Activated T-helper 1 cell treated with anti-CD3 and anti-CD28 coated beads, Interleukin-12 subunit alpha, Interleukin-12 subunit beta, Interleukin-2, Interleukin-4 antibody, amounts not matched to agents 30 ng/mL and 10 ng/mL and 1 ng/mL, durations not matched to agents 14 hours and 24 hours and 36 hours (primary cell): ENCODE measurements at regions of chr6 and their contacts with region 1.

Region 1: GRCh38 chr6:42453031-42453653 is 1.4 kb upstream of the TRERF1 start:
- DNase-seq: peak; percentile 76
- H3K4me3 Mint-ChIP-seq: peak overlapping the region; percentile 100
- H3K27ac Mint-ChIP-seq: peak overlapping the region; percentile 68
- H3K4me1 Mint-ChIP-seq: peaks cover 39% of the 10 kb centered on the region
- H3K27me3 Mint-ChIP-seq: no peaks in the 10 kb centered on the region

Region 2: GRCh38 chr6:42043787-42044475 is 409.2 kb before region 1 on chr6:
- intact Hi-C with region 1: loop called (anchors 5 kb)
- DNase-seq: peak; percentile 87
- H3K4me3 Mint-ChIP-seq: peak overlapping the region; percentile 70
- H3K27ac Mint-ChIP-seq: peak overlapping the region; percentile 83
- H3K4me1 Mint-ChIP-seq: peaks cover 82% of the 10 kb centered on the region
- H3K27me3 Mint-ChIP-seq: no peaks in the 10 kb centered on the region

Region 3: GRCh38 chr6:42315991-42316378 is 137.2 kb before region 1 on chr6:
- intact Hi-C with region 1: loop called (anchors 5 kb)
- DNase-seq: no peak
- H3K4me3 Mint-ChIP-seq: no peak overlapping the region
- H3K27ac Mint-ChIP-seq: peak overlapping the region; percentile 80
- H3K4me1 Mint-ChIP-seq: peaks cover 72% of the 10 kb centered on the region
- H3K27me3 Mint-ChIP-seq: no peaks in the 10 kb centered on the region

Region 4: DNA sequence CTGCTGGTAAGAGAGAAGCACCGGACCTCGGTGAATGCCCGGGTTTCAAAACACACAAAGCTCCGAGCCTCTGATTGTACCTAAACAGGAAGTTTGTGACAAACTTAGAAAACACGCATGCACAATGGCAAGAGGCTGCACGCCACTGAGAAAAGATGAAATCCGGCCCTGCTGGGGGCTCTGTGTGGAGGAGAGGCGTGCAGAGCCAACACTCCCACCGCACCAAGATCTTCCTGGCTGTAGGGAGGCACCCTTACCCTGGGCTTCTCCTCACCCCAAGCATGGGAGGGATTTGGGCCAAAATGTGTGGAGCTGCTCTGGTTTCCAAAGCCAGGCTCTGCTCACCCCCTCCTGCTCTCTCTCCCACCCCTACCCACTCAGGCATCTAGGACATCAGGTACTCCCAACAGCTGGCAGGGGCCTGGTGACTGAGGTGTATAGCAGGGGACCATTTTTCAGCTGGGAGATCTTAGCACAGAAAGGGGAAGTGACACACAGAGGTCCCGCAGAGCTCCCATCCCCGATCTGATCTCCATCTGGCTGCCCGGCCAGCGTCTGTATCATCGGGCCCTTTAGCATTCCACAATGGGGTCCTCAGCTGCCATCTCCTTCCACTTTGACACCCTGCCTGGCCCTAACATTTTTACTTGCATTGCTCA is 85.7 kb before region 1 on chr6:
- intact Hi-C with region 1: loop called (anchors 1 kb)
- DNase-seq: peak; percentile 42
- H3K4me3 Mint-ChIP-seq: peak overlapping the region; percentile 70
- H3K27ac Mint-ChIP-seq: peak overlapping the region; percentile 85
- H3K4me1 Mint-ChIP-seq: peaks cover 81% of the 10 kb centered on the region
- H3K27me3 Mint-ChIP-seq: no peaks in the 10 kb centered on the region

Region 5: DNA sequence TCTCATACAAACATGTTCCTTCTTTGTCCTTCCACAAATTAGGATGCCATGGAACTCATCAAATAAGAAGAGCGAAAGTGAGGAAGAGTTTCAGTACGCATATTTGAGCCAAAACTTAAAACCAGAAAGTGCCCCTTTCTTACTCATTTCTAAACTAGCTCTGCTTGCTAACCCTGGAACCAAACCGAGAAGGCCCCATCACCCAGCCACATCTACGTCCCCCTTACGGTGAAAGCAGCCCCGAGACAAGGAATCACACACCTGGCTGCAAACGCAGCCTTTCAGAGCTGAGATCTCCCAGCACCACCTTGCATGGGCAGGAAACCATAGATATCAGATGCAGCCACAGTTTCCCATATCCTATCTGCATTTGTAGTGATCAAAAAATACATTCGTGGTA is 29.9 kb before region 1 on chr6:
- intact Hi-C with region 1: loop called (anchors 1 kb)
- DNase-seq: peak; percentile 21
- H3K4me3 Mint-ChIP-seq: peak overlapping the region; percentile 27
- H3K27ac Mint-ChIP-seq: peak overlapping the region; percentile 6
- H3K4me1 Mint-ChIP-seq: peaks cover 79% of the 10 kb centered on the region
- H3K27me3 Mint-ChIP-seq: no peaks in the 10 kb centered on the region

Region 6: GRCh38 chr6:42532038-42532669 is 79.0 kb after region 1 on chr6:
- intact Hi-C with region 1: loop called (anchors 1 kb)
- DNase-seq: no peak
- H3K4me3 Mint-ChIP-seq: no peak overlapping the region
- H3K27ac Mint-ChIP-seq: no peak overlapping the region
- H3K4me1 Mint-ChIP-seq: no peaks in the 10 kb centered on the region
- H3K27me3 Mint-ChIP-seq: peaks cover 8% of the 10 kb centered on the region

Region 7: DNA sequence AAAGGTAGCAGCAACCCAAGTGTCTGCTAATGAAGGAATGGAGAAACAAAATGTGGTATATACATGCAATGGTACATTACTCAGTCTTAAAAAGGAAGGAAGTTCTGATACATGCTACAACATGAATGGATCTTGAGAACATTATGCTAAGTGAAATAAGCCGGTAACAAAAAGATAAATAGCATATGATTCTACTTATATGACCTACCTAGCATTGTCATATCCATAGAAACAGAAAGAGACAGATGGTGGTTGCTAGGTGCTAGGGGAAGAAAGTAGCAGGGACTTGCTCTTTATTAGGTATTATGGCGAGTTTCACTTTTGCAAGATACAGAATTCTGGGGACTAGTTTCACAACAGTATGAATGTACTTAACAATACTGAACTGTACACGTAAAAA is 157.3 kb after region 1 on chr6:
- intact Hi-C with region 1: no loop called
- DNase-seq: no peak
- H3K4me3 Mint-ChIP-seq: no peak overlapping the region
- H3K27ac Mint-ChIP-seq: peak overlapping the region; percentile 11
- H3K4me1 Mint-ChIP-seq: peaks cover 18% of the 10 kb centered on the region
- H3K27me3 Mint-ChIP-seq: no peaks in the 10 kb centered on the region